ENCODE measurements at regions of chr6 and their contacts with region 1.

Region 1: DNA sequence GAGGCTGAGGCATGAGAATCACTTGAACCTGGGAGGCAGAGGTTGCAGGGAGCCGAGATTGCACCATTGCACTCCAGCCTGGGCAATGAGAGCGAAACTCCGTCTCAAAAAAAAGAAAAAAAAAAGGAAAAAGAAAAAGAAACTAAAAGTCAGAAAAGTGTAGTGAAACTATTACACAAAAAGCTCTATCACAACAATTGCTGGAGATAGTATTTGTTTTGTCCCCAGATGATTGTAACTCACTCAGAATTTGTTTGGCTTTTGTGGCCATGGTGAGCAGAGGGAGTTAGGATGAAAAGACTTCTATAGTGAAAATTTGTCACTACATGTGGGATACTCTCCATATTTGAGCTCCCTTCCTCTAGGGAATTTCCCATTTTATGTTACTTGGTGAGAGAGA is 5.2 kb upstream of the GOPC start:
- DNase-seq: no peak
- H3K4me3 ChIP-seq: no peak overlapping the region
- H3K27ac ChIP-seq: no peak overlapping the region
- H3K4me1 ChIP-seq: peaks cover 0 to 6% (median 5%) of the 10 kb centered on the region in 4 donors
- H3K27me3 ChIP-seq: no peaks in the 10 kb centered on the region
- CTCF ChIP-seq: no peak
- EP300 ChIP-seq: no peak
- POLR2A ChIP-seq: no peak

Region 2: GRCh38 chr6:117449549-117450439 is 157.7 kb before region 1 on chr6:
- intact Hi-C with region 1: loop called (anchors 2 kb)
- DNase-seq: no peak
- H3K4me3 ChIP-seq: no peak overlapping the region
- H3K27ac ChIP-seq: no peak overlapping the region
- H3K4me1 ChIP-seq: peaks cover 0 to 16% (median 0%) of the 10 kb centered on the region in 4 donors
- H3K27me3 ChIP-seq: peaks cover 0 to 14% (median 0%) of the 10 kb centered on the region in 3 donors
- CTCF ChIP-seq: peak; percentile 22 to 79 (median 53)
- EP300 ChIP-seq: no peak
- POLR2A ChIP-seq: no peak

Region 3: GRCh38 chr6:117469356-117469755 is 138.2 kb before region 1 on chr6:
- intact Hi-C with region 1: no loop called
- DNase-seq: no peak
- H3K4me3 ChIP-seq: no peak overlapping the region
- H3K27ac ChIP-seq: no peak overlapping the region
- H3K4me1 ChIP-seq: no peaks in the 10 kb centered on the region
- H3K27me3 ChIP-seq: no peaks in the 10 kb centered on the region
- CTCF ChIP-seq: no peak
- EP300 ChIP-seq: no peak
- POLR2A ChIP-seq: no peak

Measured in sigmoid colon (tissue), 7 donors.